Left ventricle myocardium superior (tissue), 1 donor: ENCODE measurements at regions of chr12 and their contacts with region 1.

Region 1: GRCh38 chr12:56521590-56522371 is at the start of gene RBMS2:
- DNase-seq: peak; percentile 81
- ATAC-seq: peak; percentile 96
- total RNA-seq, gene RBMS2: 26.9 TPM

Region 2: GRCh38 chr12:56565510-56566101 is 43.8 kb after region 1 on chr12:
- intact Hi-C with region 1: loop called (anchors 5 kb)
- DNase-seq: peak; percentile 82
- ATAC-seq: peak; percentile 94

Region 3: DNA sequence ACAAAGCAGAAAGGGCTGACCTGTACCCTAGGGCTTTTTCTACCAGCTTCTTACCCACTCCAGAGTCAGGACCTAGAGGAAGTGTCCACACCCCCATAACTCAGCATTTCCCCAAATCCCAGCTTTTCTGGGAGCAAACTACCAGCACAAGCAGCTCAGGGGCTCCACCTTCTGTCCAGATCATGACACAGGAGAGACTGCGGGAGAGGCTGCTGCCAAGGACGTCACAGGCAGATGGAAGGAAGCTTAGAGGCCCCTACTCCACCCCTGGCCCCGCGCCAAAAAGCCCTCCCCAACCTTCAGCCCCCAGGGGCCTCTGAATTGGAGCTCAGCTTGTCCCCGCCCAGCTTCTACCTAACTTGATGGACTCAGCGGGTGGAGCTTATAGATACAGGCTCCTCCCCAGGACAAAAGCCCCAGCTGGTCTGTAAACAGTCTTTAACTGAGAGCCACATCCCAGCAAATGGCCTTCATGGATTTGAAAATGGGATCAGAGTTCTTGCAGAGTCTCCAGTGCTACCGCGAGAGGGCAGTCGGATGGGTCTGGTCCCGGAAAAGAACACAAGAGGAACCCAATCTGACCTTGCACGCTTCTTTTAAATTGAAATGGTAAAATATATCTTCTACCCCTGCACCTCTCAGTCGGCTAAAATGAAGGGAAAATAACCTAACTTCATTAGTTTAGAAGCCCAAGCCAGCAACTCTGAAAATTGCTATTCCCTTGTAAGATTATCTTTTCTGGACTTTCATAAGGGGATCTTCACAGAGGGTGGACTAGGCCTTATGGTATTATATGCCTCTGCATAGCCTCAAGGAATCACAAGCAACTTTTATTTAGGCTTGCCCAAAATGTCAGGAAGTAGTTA is 115.1 kb after region 1 on chr12:
- intact Hi-C with region 1: loop called (anchors 10 kb)
- DNase-seq: peak; percentile 98
- ATAC-seq: peak; percentile 78

Region 4: DNA sequence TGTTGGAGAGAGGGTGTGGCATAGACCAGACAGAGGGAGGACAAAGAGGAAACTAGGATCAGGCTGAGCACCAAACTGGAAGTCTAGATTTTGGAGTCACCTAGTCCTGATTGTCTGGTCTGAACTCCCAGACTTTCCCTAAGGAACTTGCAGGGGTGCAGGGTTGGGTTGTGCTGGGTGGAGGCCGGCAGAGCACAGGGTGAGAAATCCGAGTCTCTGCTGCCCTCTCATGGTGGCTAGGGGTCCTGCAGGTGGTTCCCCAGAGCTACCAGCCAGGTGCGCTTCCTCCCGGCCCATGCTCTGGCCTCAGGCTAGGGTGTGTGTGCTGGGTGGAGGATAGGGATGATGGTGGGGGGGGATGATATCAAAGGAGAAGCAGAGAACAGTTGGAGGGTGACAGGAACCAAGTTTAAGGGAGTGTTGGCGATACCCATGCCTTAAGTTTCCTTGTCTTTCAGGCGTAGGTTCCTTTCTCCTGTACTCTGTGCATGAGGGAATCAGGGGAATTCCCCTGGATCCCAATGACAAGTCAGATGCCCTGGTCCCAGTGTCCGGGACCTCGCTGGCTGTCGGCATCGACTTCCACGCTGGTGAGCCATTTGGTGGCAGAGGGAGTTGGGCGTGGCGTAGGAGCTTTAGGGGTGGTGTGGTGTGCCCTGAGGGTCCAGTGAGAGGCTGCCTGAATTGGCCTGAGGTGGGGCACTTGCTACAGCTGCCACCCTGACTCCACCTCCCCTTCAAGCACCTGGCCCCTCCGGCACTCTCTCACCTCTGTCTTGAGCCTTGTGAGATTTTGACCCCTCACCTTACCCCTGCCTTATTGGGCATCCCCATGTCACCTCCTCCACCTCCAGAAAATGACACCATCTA is 661.4 kb after region 1 on chr12:
- intact Hi-C with region 1: no loop called
- DNase-seq: peak; percentile 81
- ATAC-seq: peak; percentile 83